ENCODE measurements at regions of chr2 and their contacts with region 1.

Region 1: DNA sequence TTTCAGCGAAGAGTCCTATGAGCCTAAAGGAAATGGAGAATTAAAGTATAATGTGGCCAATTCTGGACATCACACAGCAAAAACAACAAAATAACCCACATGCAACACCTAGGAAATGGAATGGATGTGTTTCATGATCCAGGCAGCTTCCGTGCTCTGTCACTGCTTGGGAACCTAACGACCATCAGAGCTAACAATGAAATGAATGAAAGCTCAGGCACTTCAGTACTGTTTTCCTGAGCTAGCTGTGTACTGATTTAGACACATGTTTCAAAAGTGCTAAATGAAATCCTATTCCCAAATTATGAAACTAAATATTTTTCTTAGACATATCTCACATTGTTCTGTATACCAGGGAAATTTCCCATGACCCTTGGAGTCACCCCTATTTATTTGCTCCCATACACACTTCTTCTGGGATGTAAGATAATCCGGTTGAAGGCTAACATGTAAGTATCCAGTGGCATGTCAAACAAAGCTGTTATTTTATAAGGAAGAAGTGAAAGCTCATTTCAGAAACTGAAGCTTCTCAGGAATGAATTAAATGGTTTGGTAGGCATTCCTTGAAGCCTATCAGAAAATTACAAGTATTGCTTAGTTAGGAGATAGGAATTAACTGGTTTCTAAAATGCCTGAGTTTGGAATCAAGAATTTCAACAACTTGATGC is 108.5 kb upstream of the RND3 start:
- DNase-seq: no peak
- ATAC-seq: no peak
- H3K4me3 ChIP-seq: no peak overlapping the region
- H3K27ac ChIP-seq: no peak overlapping the region
- H3K4me1 ChIP-seq: no peaks in the 10 kb centered on the region
- H3K27me3 ChIP-seq: no peaks in the 10 kb centered on the region
- CTCF ChIP-seq: no peak
- EP300 ChIP-seq: no peak
- POLR2A ChIP-seq: no peak
- RAD21 ChIP-seq: no peak

Region 2: GRCh38 chr2:150478200-150478974 is 117.5 kb before region 1 on chr2:
- CTCF ChIA-PET with region 1: interaction called, 5 read pairs
- POLR2A ChIA-PET with region 1: interaction called, 10 read pairs
- RAD21 ChIA-PET with region 1: interaction called, 9 read pairs
- SMC1A ChIA-PET with region 1: interaction called, 15 read pairs
- in situ Hi-C with region 1: no loop called
- intact Hi-C with region 1: no loop called
- DNase-seq: no peak
- ATAC-seq: peak; percentile 16
- H3K4me3 ChIP-seq: no peak overlapping the region
- H3K27ac ChIP-seq: no peak overlapping the region
- H3K4me1 ChIP-seq: no peaks in the 10 kb centered on the region
- H3K27me3 ChIP-seq: no peaks in the 10 kb centered on the region; a peak in 1 of 4 replicates
- CTCF ChIP-seq: no peak
- EP300 ChIP-seq: no peak
- POLR2A ChIP-seq: no peak
- RAD21 ChIP-seq: no peak

Region 3: DNA sequence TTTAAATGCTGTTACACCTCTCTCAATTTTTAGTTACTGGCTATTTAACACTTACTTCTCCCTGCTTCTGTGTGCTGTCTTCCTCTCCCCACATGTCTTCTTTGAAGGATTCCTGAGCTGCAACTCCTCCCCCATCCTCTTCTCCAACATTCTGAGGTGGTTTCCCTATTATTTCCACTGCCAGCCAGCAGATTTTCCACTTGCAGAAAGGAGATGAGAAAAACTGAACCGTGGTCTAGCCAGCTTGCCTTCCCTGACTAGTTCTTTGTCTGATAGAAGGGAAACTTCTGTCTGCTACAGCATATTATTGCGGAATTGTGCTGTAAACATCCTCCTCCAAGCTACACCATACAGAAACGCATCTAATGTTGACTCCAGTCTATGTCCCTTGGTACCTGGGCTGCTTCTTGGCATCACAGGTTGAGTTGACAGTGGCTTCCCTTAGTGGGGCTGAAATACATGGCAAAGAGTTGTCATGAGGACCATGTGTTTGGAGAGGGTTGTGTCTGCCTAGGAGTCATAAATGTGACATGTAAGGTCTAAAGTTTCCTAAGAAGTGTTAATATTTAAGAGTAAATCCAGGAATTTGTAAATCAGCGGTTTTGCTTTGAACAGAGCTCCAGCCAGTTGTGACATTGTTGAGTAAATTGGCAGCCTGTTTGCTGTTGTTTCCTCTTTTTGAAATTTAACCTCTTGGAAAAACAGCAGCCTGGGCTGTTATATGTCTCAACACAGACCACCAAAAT is 40.2 kb before region 1 on chr2:
- CTCF ChIA-PET with region 1: interaction called, 6 read pairs
- POLR2A ChIA-PET with region 1: interaction called, 5 read pairs
- RAD21 ChIA-PET with region 1: interaction called, 10 read pairs
- SMC1A ChIA-PET with region 1: interaction called, 35 read pairs
- in situ Hi-C with region 1: no loop called
- intact Hi-C with region 1: no loop called
- DNase-seq: no peak
- ATAC-seq: peak; percentile 63
- H3K4me3 ChIP-seq: no peak overlapping the region
- H3K27ac ChIP-seq: no peak overlapping the region
- H3K4me1 ChIP-seq: no peaks in the 10 kb centered on the region
- H3K27me3 ChIP-seq: no peaks in the 10 kb centered on the region
- CTCF ChIP-seq: no peak
- EP300 ChIP-seq: no peak
- POLR2A ChIP-seq: no peak
- RAD21 ChIP-seq: no peak

Region 4: GRCh38 chr2:150561076-150561475 is 34.9 kb before region 1 on chr2:
- CTCF ChIA-PET with region 1: interaction called, 6 read pairs
- POLR2A ChIA-PET with region 1: interaction called, 5 read pairs
- RAD21 ChIA-PET with region 1: interaction called, 10 read pairs
- SMC1A ChIA-PET with region 1: interaction called, 35 read pairs
- in situ Hi-C with region 1: no loop called
- intact Hi-C with region 1: no loop called
- DNase-seq: no peak
- ATAC-seq: peak; percentile 25; the same call in 2 of the 3 replicates
- H3K4me3 ChIP-seq: no peak overlapping the region
- H3K27ac ChIP-seq: no peak overlapping the region
- H3K4me1 ChIP-seq: no peaks in the 10 kb centered on the region
- H3K27me3 ChIP-seq: no peaks in the 10 kb centered on the region
- CTCF ChIP-seq: no peak
- EP300 ChIP-seq: no peak
- POLR2A ChIP-seq: no peak
- RAD21 ChIP-seq: no peak

Region 5: DNA sequence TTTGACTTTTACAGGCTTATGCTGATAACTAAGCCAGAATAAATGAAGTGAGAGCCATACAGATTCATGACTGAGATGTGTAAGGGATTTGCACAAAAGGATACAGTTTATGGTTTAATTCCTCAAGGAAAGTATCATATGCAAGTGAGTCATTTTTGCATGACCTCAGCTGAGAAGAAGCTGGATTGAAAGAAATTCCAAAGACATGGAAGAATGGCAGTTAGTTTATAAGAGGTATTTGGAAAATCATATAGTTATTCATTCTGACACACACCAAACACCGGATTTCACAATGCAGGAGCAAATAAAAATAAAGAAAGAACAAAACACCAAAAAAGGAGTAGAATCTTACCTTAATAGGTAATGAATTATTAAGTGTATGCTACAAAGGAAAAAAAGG is 25.2 kb before region 1 on chr2:
- CTCF ChIA-PET with region 1: interaction called, 7 read pairs
- POLR2A ChIA-PET with region 1: interaction called, 6 read pairs
- RAD21 ChIA-PET with region 1: interaction called, 41 read pairs
- SMC1A ChIA-PET with region 1: interaction called, 41 read pairs
- in situ Hi-C with region 1: no loop called
- intact Hi-C with region 1: no loop called
- DNase-seq: no peak
- ATAC-seq: no peak
- H3K4me3 ChIP-seq: no peak overlapping the region
- H3K27ac ChIP-seq: no peak overlapping the region
- H3K4me1 ChIP-seq: peaks cover 3% of the 10 kb centered on the region; the same call in 1 of the 2 replicates
- H3K27me3 ChIP-seq: no peaks in the 10 kb centered on the region
- CTCF ChIP-seq: no peak
- EP300 ChIP-seq: no peak
- POLR2A ChIP-seq: no peak
- RAD21 ChIP-seq: no peak

Region 6: DNA sequence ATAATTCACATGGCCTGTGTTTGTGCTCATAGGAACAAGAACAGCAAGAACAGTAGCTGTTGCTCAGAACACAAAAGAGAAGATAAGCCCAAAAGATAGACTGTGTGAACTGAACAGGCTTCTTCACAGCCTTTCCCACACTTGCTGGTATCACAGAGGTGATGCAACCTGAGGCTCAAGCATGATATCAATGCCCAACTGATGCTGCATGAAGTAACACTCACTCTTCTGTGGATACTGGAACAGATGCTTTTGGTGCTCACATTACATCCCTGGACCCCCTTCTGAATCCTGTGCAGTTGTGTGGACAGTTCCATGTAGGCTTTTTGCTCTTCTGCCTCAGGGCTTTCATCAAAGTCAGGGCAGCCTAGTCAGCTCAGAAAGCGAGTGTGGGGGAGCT is 20.1 kb before region 1 on chr2:
- CTCF ChIA-PET with region 1: interaction called, 14 read pairs
- POLR2A ChIA-PET with region 1: interaction called, 6 read pairs
- RAD21 ChIA-PET with region 1: interaction called, 41 read pairs
- SMC1A ChIA-PET with region 1: interaction called, 41 read pairs
- in situ Hi-C with region 1: no loop called
- intact Hi-C with region 1: no loop called
- DNase-seq: no peak
- ATAC-seq: no peak
- H3K4me3 ChIP-seq: no peak overlapping the region
- H3K27ac ChIP-seq: no peak overlapping the region
- H3K4me1 ChIP-seq: peaks cover 3% of the 10 kb centered on the region; the same call in 1 of the 2 replicates
- H3K27me3 ChIP-seq: no peaks in the 10 kb centered on the region
- CTCF ChIP-seq: no peak
- EP300 ChIP-seq: no peak
- POLR2A ChIP-seq: no peak
- RAD21 ChIP-seq: no peak

Region 7: DNA sequence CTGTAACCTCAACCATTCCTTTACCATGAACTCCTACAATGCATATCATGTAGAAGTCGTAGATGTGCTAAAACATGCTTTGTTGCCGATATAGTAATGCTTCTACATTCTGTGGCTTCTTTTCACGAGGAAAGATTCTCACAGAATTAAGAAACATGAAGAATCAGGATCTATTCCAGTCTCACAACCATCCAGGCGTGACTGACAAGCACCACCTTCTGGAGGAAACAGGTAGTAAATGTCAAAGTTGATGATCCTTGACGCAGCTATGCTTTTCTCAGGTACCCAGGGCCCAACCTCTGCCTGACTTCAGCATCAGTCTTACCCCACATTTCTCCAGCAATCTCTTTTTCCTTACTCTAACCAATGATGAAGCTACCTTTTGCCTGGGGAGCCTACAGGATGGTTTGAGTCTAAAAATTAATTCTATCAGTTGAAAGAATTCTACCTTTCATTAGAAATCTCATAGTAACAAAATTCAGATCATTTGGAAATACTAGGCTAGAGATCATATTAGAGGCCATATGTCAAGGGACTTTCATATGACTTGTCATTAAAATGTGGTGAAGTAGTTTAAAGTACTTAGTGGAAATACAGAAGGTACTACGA is 14.8 kb after region 1 on chr2:
- CTCF ChIA-PET with region 1: interaction called, 31 read pairs
- POLR2A ChIA-PET with region 1: interaction called, 4 read pairs
- RAD21 ChIA-PET with region 1: interaction called, 25 read pairs
- SMC1A ChIA-PET with region 1: interaction called, 21 read pairs
- in situ Hi-C with region 1: no loop called
- intact Hi-C with region 1: no loop called
- DNase-seq: no peak
- ATAC-seq: peak; percentile 85
- H3K4me3 ChIP-seq: no peak overlapping the region
- H3K27ac ChIP-seq: no peak overlapping the region
- H3K4me1 ChIP-seq: no peaks in the 10 kb centered on the region
- H3K27me3 ChIP-seq: no peaks in the 10 kb centered on the region; a peak in 1 of 4 replicates
- CTCF ChIP-seq: peak; percentile 30 to 52 (median 46); a peak in 4 of 6 replicates
- EP300 ChIP-seq: no peak
- POLR2A ChIP-seq: no peak
- RAD21 ChIP-seq: peak; percentile 55

Region 8: DNA sequence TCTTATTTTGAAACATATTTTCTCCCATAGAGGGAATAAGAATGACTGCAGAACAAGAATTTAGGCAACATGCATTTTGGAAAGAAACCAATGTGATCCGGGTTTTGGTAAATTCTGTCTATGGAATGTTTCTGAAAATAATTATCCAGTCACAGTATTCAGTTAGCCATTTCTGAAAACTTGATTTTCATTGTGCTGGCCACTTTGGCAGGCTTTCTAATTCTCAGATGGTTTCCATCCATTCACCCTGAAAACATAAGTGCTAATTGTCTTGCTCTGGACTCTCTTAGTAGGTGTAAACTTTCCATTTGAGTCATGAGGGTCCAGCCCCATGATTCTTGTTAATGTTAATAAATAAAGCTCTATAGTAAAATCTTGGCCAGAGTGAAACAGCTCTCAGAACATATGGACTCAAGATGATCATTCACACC is 489.3 kb after region 1 on chr2:
- CTCF ChIA-PET with region 1: no interaction called
- POLR2A ChIA-PET with region 1: no interaction called
- RAD21 ChIA-PET with region 1: no interaction called
- SMC1A ChIA-PET with region 1: no interaction called
- in situ Hi-C with region 1: no loop called
- intact Hi-C with region 1: no loop called
- DNase-seq: no peak
- ATAC-seq: no peak
- H3K4me3 ChIP-seq: no peak overlapping the region
- H3K27ac ChIP-seq: no peak overlapping the region
- H3K4me1 ChIP-seq: no peaks in the 10 kb centered on the region
- H3K27me3 ChIP-seq: no peaks in the 10 kb centered on the region
- CTCF ChIP-seq: no peak
- EP300 ChIP-seq: no peak
- POLR2A ChIP-seq: no peak
- RAD21 ChIP-seq: no peak